ENCODE measurements at regions of chr22 and their contacts with region 1.

Region 1: GRCh38 chr22:29635734-29636357 is 32.4 kb downstream of the NF2 start:
- DNase-seq: no peak
- H3K4me3 Mint-ChIP-seq: no peak overlapping the region
- H3K27ac Mint-ChIP-seq: no peak overlapping the region
- H3K4me1 Mint-ChIP-seq: peaks cover 37% of the 10 kb centered on the region
- H3K27me3 Mint-ChIP-seq: no peaks in the 10 kb centered on the region

Region 2: DNA sequence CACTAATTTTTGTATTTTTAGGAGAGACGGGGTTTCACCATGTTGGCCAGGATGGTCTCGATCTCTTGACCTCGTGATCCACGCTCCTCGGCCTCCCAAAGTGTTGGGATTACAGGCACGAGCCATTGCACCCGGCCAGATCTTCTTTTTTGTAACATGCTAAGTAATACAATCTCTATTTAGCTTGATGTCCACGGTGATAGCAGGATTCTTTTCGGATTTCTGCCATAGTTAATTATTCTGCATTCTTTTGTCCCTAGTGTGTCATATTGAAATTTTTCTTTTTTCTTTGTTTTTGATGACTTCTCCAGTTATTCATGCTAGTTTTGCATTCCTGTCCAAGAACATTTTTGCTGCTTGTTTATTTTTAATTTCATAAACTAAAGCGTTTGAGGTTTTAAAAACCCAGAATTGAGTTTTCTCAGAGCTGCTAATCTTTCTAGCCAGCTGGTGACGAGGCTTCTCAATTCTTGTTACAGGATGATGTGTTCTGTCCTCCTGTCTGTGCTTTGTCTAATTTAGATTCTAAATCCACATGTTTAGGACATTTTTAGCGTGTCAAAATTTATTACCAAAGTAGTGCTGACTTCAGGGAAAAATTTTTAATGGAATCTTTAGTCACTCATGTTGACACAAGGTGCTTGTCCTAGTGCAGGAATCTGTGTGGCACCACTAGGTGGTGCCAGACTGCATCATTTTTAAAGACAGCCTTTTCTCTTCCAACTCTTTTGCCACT is 10.6 kb before region 1 on chr22:
- CTCF ChIA-PET with region 1: interaction called, 37 read pairs
- POLR2A ChIA-PET with region 1: no interaction called
- DNase-seq: peak; percentile 53
- H3K4me3 Mint-ChIP-seq: no peak overlapping the region
- H3K27ac Mint-ChIP-seq: peak overlapping the region; percentile 16
- H3K4me1 Mint-ChIP-seq: peaks cover 59% of the 10 kb centered on the region
- H3K27me3 Mint-ChIP-seq: no peaks in the 10 kb centered on the region